Heart left ventricle (tissue), 16 donors: ENCODE measurements at regions of chr6 and their contacts with region 1.

Region 1: DNA sequence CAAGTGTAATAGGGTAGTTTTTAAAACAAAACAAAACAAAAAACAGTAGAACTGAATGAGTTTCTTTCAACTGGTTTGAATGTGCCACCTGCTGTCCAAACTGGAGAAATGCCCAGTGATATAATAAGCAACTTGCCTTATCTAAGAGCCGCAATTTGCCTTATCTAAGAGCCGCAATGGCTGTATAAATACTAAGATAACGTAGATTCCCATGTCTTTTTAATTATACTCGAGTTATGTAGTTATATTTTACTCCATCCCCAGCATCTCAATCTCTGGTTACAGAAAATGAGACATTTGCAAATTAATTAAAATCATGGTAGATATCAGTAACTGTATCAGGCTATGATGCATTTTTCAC is 67.2 kb downstream of the RPP40 start:
- DNase-seq: no peak
- ATAC-seq: peak in 2 of 4 donors; percentile 33 to 52
- H3K4me3 ChIP-seq: no peak overlapping the region
- H3K27ac ChIP-seq: no peak overlapping the region
- H3K4me1 ChIP-seq: peaks cover 0 to 33% (median 14%) of the 10 kb centered on the region in 12 donors
- H3K27me3 ChIP-seq: no peaks in the 10 kb centered on the region
- CTCF ChIP-seq: peak; percentile 45 to 78 (median 65)
- POLR2A ChIP-seq: no peak

Region 2: DNA sequence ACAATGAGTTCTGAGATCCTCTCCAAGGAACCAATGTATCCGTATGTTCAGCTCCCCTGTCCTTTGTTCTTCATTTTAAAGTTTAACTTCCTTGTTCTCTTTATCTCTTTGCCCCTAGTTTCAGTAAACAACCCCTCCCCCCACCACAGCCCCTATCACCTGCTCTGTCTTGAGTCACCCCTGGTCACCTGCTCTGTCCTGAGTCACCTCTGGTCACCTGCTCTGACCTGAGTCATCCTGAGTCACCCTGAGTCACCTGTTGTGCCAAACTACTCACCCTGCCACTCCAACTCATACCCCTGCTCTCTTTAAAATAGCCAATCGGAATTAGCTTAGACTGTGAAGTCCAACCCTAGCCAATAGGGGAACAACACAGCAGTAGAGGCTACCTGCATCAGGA is 449.1 kb before region 1 on chr6:
- intact Hi-C with region 1: loop called in 1 of 10 experiments (anchors 10 kb)
- DNase-seq: no peak
- ATAC-seq: no peak
- H3K4me3 ChIP-seq: no peak overlapping the region
- H3K27ac ChIP-seq: no peak overlapping the region
- H3K4me1 ChIP-seq: no peaks in the 10 kb centered on the region
- H3K27me3 ChIP-seq: no peaks in the 10 kb centered on the region
- CTCF ChIP-seq: no peak
- POLR2A ChIP-seq: no peak

Region 3: GRCh38 chr6:4829089-4829488 is 107.6 kb before region 1 on chr6:
- intact Hi-C with region 1: no loop called
- DNase-seq: no peak
- ATAC-seq: no peak
- H3K4me3 ChIP-seq: no peak overlapping the region
- H3K27ac ChIP-seq: no peak overlapping the region
- H3K4me1 ChIP-seq: no peaks in the 10 kb centered on the region
- H3K27me3 ChIP-seq: no peaks in the 10 kb centered on the region
- CTCF ChIP-seq: no peak
- POLR2A ChIP-seq: no peak